Right ventricle myocardium inferior (tissue), 1 donor: ENCODE measurements at regions of chr13 and their contacts with region 1.

Region 1: GRCh38 chr13:21476893-21477472 is 17.9 kb upstream of the ZDHHC20 start:
- DNase-seq: peak; percentile 78
- ATAC-seq: peak; percentile 86

Region 2: GRCh38 chr13:20400774-20401173 is 1076.2 kb before region 1 on chr13:
- intact Hi-C with region 1: no loop called
- DNase-seq: no peak
- ATAC-seq: no peak

Region 3: DNA sequence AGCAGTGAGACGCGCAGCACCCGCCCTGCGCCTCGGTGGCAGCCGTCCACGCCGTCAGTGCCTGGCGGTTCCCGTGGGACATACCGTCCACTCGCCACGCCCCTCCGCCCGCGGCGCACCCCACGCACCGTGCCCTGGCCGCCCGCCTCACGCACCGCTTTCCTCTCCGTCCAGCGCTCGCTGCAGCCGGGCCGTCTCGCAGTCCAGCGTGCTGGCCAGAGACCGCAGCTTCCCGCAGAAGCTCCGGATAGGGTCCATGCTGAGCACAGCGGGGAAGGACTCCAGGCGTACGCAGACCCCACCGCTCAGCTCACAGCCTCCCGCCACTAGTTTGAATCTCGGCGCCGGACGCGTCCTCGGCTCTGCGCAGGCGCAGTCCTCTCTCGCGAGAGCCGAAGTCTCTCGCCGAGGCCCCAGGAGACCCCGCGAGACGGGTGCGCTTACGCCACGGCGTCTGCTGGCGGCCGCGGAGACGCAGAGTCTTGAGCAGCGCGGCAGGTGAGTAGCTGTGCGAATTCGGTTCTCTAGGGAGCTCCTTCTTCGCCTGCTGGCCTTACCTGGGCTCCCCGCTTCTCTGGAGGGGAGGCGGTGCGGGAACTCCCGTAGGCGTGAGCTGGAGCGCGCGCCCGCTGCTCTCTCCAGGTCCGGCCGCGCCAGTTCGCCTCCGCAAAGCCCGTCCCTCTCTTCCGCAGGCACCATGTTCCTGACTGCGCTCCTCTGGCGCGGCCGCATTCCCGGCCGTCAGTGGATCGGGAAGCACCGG is 300.6 kb before region 1 on chr13 and contains the starts of genes MRPL57 and SKA3:
- intact Hi-C with region 1: loop called (anchors 5 kb)
- DNase-seq: peak; percentile 95
- ATAC-seq: peak; percentile 97
- total RNA-seq, gene MRPL57: 22.3 TPM
- total RNA-seq, gene SKA3: 0.38 TPM

Region 4: GRCh38 chr13:21297914-21298831 is 178.8 kb before region 1 on chr13:
- intact Hi-C with region 1: loop called (anchors 1 kb)
- DNase-seq: peak; percentile 93
- ATAC-seq: peak; percentile 100

Region 5: GRCh38 chr13:21528621-21529020 is 51.6 kb after region 1 on chr13:
- intact Hi-C with region 1: no loop called
- DNase-seq: no peak
- ATAC-seq: no peak

Region 6: GRCh38 chr13:21767025-21767424 is 290.0 kb after region 1 on chr13:
- intact Hi-C with region 1: no loop called
- DNase-seq: no peak
- ATAC-seq: no peak